ENCODE measurements at regions of chr1 and their contacts with region 1.

Region 1: DNA sequence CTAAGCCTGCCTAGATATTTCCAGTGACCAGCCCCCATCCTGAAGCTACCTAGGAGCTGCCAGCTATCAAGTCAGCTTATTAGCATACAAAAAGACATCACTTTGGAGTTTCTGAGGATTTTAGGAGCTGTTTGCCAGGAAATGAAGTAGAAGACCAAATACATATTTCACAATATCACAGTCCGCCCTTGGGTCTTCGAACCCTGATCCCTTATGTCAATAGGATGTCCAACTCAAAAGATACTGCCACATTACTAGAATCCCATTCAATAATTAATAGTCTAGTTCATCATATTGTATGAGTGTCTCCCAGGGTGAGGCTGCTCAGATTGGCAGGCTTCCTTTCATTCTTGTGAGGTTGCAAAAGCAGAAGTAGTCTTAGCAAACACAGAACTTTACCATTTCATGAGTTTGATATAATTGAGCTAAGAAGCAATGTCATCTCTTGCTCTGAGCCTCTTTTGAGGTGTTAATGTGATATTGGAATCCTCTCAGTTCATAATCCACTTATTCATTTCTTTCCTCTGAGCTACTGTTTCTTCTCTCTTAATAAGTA is 13.6 kb downstream of the IPO9 start:
- DNase-seq: no peak
- ATAC-seq: no peak
- H3K4me3 Mint-ChIP-seq: no peak overlapping the region
- H3K27ac Mint-ChIP-seq: peak overlapping the region; percentile 33
- H3K4me1 Mint-ChIP-seq: peaks cover 29% of the 10 kb centered on the region
- H3K27me3 Mint-ChIP-seq: no peaks in the 10 kb centered on the region
- CTCF ChIP-seq: no peak

Region 2: DNA sequence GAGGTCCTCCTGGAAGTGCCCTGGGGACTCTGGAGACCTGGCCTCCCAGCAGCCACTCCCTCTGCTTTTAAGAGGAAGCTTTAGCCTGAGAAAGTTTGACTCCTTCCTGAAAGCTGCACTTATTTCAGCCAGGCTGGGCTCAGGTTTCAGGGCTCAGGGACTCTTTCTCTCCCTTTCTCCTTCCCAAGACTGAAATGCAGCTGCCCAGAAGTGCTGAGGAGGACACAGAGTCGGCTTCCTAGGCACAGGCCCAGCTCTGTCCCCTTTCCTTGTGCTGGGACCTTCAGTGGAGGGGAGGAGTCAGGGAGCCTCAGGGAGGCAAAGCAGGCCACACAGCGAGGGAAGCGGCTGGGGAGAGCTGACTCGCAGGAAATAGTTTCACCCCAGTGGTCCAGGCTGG is 166.4 kb before region 1 on chr1:
- CTCF ChIA-PET with region 1: no interaction called
- POLR2A ChIA-PET with region 1: no interaction called
- DNase-seq: peak; percentile 50
- ATAC-seq: peak; percentile 66
- H3K4me3 Mint-ChIP-seq: peak overlapping the region; percentile 14; the same call in 1 of the 2 replicates
- H3K27ac Mint-ChIP-seq: peak overlapping the region; percentile 84
- H3K4me1 Mint-ChIP-seq: peaks cover 66% of the 10 kb centered on the region
- H3K27me3 Mint-ChIP-seq: no peaks in the 10 kb centered on the region
- CTCF ChIP-seq: no peak

Region 3: GRCh38 chr1:201828820-201829774 is 13.5 kb before region 1 on chr1 and contains the start of gene IPO9:
- CTCF ChIA-PET with region 1: interaction called, 29 read pairs
- POLR2A ChIA-PET with region 1: no interaction called
- DNase-seq: peak; percentile 97
- ATAC-seq: peak; percentile 90
- H3K4me3 Mint-ChIP-seq: peak within 1 kb of the TSS; percentile 98
- H3K27ac Mint-ChIP-seq: peak within 1 kb of the TSS; percentile 93
- H3K4me1 Mint-ChIP-seq: peaks cover 50% of the 10 kb centered on the region
- H3K27me3 Mint-ChIP-seq: no peaks in the 10 kb centered on the region
- CTCF ChIP-seq: peak; percentile 92
- total RNA-seq, gene IPO9: 94.1 to 98.6 TPM (median 97.2 TPM) in 3 replicates

Region 4: GRCh38 chr1:201859424-201859823 is 16.9 kb after region 1 on chr1:
- CTCF ChIA-PET with region 1: no interaction called
- POLR2A ChIA-PET with region 1: no interaction called
- DNase-seq: no peak
- ATAC-seq: no peak
- H3K4me3 Mint-ChIP-seq: no peak overlapping the region
- H3K27ac Mint-ChIP-seq: no peak overlapping the region
- H3K4me1 Mint-ChIP-seq: no peaks in the 10 kb centered on the region
- H3K27me3 Mint-ChIP-seq: no peaks in the 10 kb centered on the region; the same call in 1 of the 2 replicates
- CTCF ChIP-seq: no peak

Measured in WTC11 (cell line).